ENCODE measurements at regions of chrX and their contacts with region 1.

Region 1: DNA sequence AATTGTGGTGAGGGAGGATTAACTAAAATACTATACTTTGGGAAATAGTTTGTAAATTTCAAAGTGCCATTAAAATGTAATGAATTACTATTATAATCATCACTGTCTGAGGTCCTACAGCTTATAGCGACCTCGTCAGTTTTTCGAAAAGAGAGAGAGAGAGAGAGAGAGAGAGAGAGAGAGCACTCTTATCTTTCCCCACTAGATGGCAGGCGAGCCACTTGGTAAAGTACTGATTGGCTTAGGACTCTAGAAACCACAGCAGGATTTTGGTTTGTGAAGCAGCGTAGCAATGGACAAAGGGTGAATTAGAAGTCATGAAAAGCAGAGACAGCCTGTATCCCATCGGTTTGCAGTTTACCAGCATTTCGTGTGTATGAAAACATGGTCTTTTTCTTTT is 52.5 kb downstream of the LINC00632 start:
- DNase-seq: peak in 1 of 2 donors; percentile 74
- H3K4me3 ChIP-seq: no peak overlapping the region
- H3K27ac ChIP-seq: no peak overlapping the region
- H3K4me1 ChIP-seq: no peaks in the 10 kb centered on the region
- H3K27me3 ChIP-seq: no peaks in the 10 kb centered on the region
- CTCF ChIP-seq: peak; percentile 48 to 75 (median 63)

Region 2: GRCh38 chrX:139324756-139325155 is 1437.3 kb before region 1 on chrX:
- intact Hi-C with region 1: no loop called
- DNase-seq: no peak
- H3K4me3 ChIP-seq: no peak overlapping the region
- H3K27ac ChIP-seq: no peak overlapping the region
- H3K4me1 ChIP-seq: no peaks in the 10 kb centered on the region
- H3K27me3 ChIP-seq: no peaks in the 10 kb centered on the region
- CTCF ChIP-seq: no peak

Region 3: DNA sequence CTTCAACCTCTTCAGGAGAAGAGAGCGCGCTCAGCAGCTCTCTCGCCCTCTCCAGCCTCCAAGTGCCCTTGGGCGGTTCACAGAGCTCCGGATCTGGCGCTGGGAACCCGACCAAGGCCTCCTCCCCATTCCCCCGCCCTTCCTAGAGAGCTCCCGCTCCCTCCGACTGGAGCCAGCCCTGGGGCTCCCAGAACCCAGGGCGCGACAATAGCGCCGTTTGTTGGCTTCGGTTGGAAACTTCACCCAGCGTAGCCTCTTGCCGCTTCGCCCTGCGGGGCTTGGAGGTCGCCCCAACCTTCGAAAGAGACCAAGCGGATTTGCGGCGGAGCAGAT is 254.1 kb before region 1 on chrX:
- intact Hi-C with region 1: no loop called
- DNase-seq: no peak
- H3K4me3 ChIP-seq: no peak overlapping the region
- H3K27ac ChIP-seq: no peak overlapping the region
- H3K4me1 ChIP-seq: no peaks in the 10 kb centered on the region
- H3K27me3 ChIP-seq: peaks cover 13% of the 10 kb centered on the region
- CTCF ChIP-seq: no peak

Region 4: GRCh38 chrX:140712413-140713173 is 49.5 kb before region 1 on chrX:
- intact Hi-C with region 1: no loop called
- DNase-seq: peak in 1 of 2 donors; percentile 67
- H3K4me3 ChIP-seq: peak overlapping the region; percentile 27 to 55
- H3K27ac ChIP-seq: no peak overlapping the region
- H3K4me1 ChIP-seq: no peaks in the 10 kb centered on the region
- H3K27me3 ChIP-seq: no peaks in the 10 kb centered on the region
- CTCF ChIP-seq: no peak

Region 5: GRCh38 chrX:141176586-141177451 is 414.8 kb after region 1 on chrX and contains the start of gene LDOC1:
- intact Hi-C with region 1: loop called (anchors 10 kb)
- DNase-seq: peak; percentile 16 to 89
- H3K4me3 ChIP-seq: peak within 1 kb of the TSS; percentile 58 to 81
- H3K27ac ChIP-seq: peak within 1 kb of the TSS; percentile 81 to 88
- H3K4me1 ChIP-seq: no peaks in the 10 kb centered on the region
- H3K27me3 ChIP-seq: no peaks in the 10 kb centered on the region
- CTCF ChIP-seq: no peak
- total RNA-seq, gene LDOC1: 21.9 TPM

Region 6: DNA sequence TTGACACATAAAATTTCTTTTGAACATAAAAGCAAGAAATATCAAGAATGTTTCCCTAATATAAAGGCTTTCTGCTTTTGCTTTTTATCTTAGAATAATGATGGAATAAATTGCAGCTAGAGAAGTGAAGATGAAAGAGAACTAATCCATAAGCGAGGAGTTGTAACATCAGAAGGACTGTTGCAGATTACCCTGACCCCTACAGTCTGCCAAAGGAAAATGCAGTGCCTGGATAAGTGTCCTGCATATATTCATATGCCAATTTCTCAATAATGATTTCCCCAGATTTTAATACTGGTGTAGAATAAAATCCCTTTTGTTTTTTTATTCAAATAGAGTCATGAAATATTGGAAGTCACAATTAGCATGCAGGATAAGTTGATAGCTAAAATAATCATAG is 1327.1 kb after region 1 on chrX:
- intact Hi-C with region 1: loop called (anchors 5 kb)
- DNase-seq: no peak
- H3K4me3 ChIP-seq: no peak overlapping the region
- H3K27ac ChIP-seq: no peak overlapping the region
- H3K4me1 ChIP-seq: no peaks in the 10 kb centered on the region
- H3K27me3 ChIP-seq: no peaks in the 10 kb centered on the region
- CTCF ChIP-seq: peak in 2 of 3 experiments; percentile 31 to 55

Region 7: GRCh38 chrX:142601792-142602191 is 1839.7 kb after region 1 on chrX:
- intact Hi-C with region 1: loop called (anchors 10 kb)
- DNase-seq: no peak
- H3K4me3 ChIP-seq: no peak overlapping the region
- H3K27ac ChIP-seq: no peak overlapping the region
- H3K4me1 ChIP-seq: no peaks in the 10 kb centered on the region
- H3K27me3 ChIP-seq: no peaks in the 10 kb centered on the region
- CTCF ChIP-seq: no peak